ENCODE measurements at regions of chr11 and their contacts with region 1.

Region 1: DNA sequence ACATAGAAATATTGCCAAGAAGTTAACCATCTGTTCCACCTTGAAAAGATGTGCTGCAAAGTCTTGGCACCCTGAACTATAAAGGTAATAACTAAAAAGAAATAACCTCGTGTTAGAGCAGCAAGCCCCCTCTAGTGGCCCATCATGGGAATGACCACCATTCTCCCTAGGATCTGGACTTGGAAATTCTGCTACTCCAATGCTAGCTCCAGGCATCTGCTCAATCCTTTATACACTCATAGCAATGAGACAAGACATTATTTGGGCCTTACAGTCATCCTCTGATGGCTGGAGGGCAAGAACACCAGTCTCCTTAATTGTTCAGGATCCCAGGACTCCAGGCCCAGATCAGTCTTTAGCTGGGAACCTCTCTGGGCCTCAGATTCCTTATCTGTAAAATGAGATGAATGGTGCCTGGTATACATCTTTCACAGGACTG is 76.0 kb downstream of the CWC15 start:
- DNase-seq: peak; percentile 11
- ATAC-seq: peak; percentile 58
- H3K4me3 ChIP-seq: no peak overlapping the region
- H3K27ac ChIP-seq: no peak overlapping the region
- H3K4me1 ChIP-seq: no peaks in the 10 kb centered on the region
- H3K27me3 ChIP-seq: no peaks in the 10 kb centered on the region
- CTCF ChIP-seq: peak; percentile 75
- EP300 ChIP-seq: no peak
- POLR2A ChIP-seq: no peak
- RAD21 ChIP-seq: peak; percentile 36; the same call in 1 of the 2 replicates

Region 2: GRCh38 chr11:94786264-94787126 is 110.9 kb before region 1 on chr11:
- CTCF ChIA-PET with region 1: interaction called, 6 read pairs
- POLR2A ChIA-PET with region 1: no interaction called
- in situ Hi-C with region 1: loop called (anchors 5 kb)
- intact Hi-C with region 1: loop called (anchors 1 kb)
- DNase-seq: peak; percentile 16
- ATAC-seq: peak; percentile 59
- H3K4me3 ChIP-seq: no peak overlapping the region
- H3K27ac ChIP-seq: no peak overlapping the region
- H3K4me1 ChIP-seq: no peaks in the 10 kb centered on the region
- H3K27me3 ChIP-seq: no peaks in the 10 kb centered on the region
- CTCF ChIP-seq: peak; percentile 49
- EP300 ChIP-seq: no peak
- POLR2A ChIP-seq: no peak
- RAD21 ChIP-seq: no peak

Region 3: DNA sequence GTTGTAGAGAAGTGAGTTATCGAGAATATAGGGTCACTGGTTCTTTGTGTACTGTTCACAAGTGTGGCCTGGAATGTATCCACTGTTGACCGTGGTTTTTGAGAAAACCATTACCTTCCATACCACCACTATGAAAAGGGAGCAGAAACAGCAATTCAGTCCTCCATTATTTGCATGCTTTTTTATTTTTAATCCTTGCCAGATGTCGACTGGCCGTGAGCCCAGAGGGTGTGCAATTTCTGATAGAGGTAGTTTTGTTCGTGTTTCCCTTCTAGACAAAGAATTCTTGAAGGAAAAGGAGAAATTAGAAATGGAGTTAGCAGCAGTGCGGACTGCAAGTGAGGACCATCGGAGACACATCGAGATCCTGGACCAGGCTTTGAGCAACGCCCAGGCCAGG is 47.5 kb before region 1 on chr11:
- CTCF ChIA-PET with region 1: no interaction called
- POLR2A ChIA-PET with region 1: no interaction called
- in situ Hi-C with region 1: no loop called
- intact Hi-C with region 1: loop called (anchors 1 kb)
- DNase-seq: no peak
- ATAC-seq: no peak
- H3K4me3 ChIP-seq: no peak overlapping the region
- H3K27ac ChIP-seq: no peak overlapping the region
- H3K4me1 ChIP-seq: no peaks in the 10 kb centered on the region
- H3K27me3 ChIP-seq: no peaks in the 10 kb centered on the region
- CTCF ChIP-seq: no peak
- EP300 ChIP-seq: no peak
- POLR2A ChIP-seq: no peak
- RAD21 ChIP-seq: no peak

Region 4: GRCh38 chr11:94938095-94939055 is 41.0 kb after region 1 on chr11:
- CTCF ChIA-PET with region 1: no interaction called
- POLR2A ChIA-PET with region 1: no interaction called
- in situ Hi-C with region 1: no loop called
- intact Hi-C with region 1: no loop called
- DNase-seq: no peak
- ATAC-seq: no peak
- H3K4me3 ChIP-seq: no peak overlapping the region
- H3K27ac ChIP-seq: no peak overlapping the region
- H3K4me1 ChIP-seq: no peaks in the 10 kb centered on the region
- H3K27me3 ChIP-seq: peaks cover 0 to 10% of the 10 kb centered on the region in 2 experiments; a peak in 1 of 5 replicates
- CTCF ChIP-seq: no peak
- EP300 ChIP-seq: no peak
- POLR2A ChIP-seq: no peak
- RAD21 ChIP-seq: no peak